ENCODE measurements at regions of chr5 and their contacts with region 1.

Region 1: DNA sequence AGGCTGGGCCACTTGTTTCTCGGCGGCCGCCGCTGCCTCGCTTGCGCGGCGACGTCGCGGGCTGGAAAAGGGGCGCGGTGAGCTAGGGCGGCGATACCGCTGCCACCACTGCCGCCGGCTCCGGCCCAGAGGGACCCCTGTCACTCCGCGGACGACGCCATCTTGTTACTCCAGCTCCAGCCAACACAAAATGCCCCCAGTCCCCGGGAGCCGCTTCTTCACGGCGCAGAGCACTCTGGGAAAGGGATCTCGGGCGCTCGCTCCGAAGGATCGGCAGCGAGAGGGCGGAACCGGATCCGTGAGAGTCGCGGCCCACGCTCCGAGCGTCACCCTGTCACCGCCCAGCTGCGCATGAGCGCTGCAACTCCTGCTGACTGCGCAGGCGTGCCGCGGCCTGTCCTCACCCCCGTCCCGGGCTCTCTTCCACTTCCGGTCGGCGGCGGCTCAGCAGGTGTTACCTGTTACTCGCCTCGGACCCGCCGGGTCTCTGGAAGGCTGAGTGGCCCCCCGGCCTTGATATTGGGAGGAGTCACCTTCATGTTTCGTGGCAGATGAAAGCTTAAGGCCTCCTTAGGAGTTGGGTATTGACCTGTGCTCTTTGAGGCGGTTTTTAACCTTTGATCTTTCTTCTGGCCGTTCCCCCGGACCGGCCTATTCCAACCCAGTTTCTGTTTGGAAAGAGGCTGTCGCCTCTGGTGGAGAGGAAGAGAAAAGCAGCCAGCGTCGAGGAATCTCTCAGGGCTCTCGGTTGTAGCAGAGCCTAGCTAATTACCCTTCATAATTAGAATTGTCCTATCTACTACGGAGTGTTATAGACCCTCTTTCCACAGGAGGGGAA is at the start of gene CSNK1A1:
- DNase-seq: peak; percentile 98 to 100 (median 99)
- ATAC-seq: peak; percentile 94 to 98 (median 98)
- H3K4me3 ChIP-seq: peak within 1 kb of the TSS; percentile 58 to 95 (median 90)
- H3K27ac ChIP-seq: peak within 1 kb of the TSS; percentile 93 to 100 (median 98)
- H3K4me1 ChIP-seq: peaks cover 4 to 44% (median 30%) of the 10 kb centered on the region in 12 donors
- H3K27me3 ChIP-seq: no peaks in the 10 kb centered on the region
- CTCF ChIP-seq: peak; percentile 65 to 91 (median 81)
- POLR2A ChIP-seq: peak; percentile 66 to 91
- total RNA-seq, gene CSNK1A1: 156 to 242 (median 210) TPM

Region 2: GRCh38 chr5:149434162-149435014 is 117.0 kb before region 1 on chr5:
- intact Hi-C with region 1: loop called in 1 of 10 experiments (anchors 5 kb)
- DNase-seq: peak in 3 of 5 donors; percentile 60 to 64 (median 62)
- ATAC-seq: peak; percentile 14 to 27 (median 22)
- H3K4me3 ChIP-seq: no peak overlapping the region
- H3K27ac ChIP-seq: peak overlapping the region in 10 of 12 donors; percentile 8 to 97 (median 44)
- H3K4me1 ChIP-seq: peaks cover 7 to 47% (median 23%) of the 10 kb centered on the region in 12 donors
- H3K27me3 ChIP-seq: no peaks in the 10 kb centered on the region
- CTCF ChIP-seq: peak; percentile 82 to 94 (median 88)
- POLR2A ChIP-seq: no peak

Region 3: GRCh38 chr5:149442563-149443182 is 108.7 kb before region 1 on chr5:
- intact Hi-C with region 1: loop called in 5 of 10 experiments (anchors 1 to 5 kb)
- DNase-seq: peak; percentile 81 to 90 (median 85)
- ATAC-seq: peak; percentile 79 to 90 (median 86)
- H3K4me3 ChIP-seq: no peak overlapping the region
- H3K27ac ChIP-seq: peak overlapping the region; percentile 70 to 96 (median 85)
- H3K4me1 ChIP-seq: peaks cover 0 to 42% (median 21%) of the 10 kb centered on the region in 12 donors
- H3K27me3 ChIP-seq: no peaks in the 10 kb centered on the region
- CTCF ChIP-seq: peak; percentile 90 to 96 (median 93)
- POLR2A ChIP-seq: no peak

Region 4: DNA sequence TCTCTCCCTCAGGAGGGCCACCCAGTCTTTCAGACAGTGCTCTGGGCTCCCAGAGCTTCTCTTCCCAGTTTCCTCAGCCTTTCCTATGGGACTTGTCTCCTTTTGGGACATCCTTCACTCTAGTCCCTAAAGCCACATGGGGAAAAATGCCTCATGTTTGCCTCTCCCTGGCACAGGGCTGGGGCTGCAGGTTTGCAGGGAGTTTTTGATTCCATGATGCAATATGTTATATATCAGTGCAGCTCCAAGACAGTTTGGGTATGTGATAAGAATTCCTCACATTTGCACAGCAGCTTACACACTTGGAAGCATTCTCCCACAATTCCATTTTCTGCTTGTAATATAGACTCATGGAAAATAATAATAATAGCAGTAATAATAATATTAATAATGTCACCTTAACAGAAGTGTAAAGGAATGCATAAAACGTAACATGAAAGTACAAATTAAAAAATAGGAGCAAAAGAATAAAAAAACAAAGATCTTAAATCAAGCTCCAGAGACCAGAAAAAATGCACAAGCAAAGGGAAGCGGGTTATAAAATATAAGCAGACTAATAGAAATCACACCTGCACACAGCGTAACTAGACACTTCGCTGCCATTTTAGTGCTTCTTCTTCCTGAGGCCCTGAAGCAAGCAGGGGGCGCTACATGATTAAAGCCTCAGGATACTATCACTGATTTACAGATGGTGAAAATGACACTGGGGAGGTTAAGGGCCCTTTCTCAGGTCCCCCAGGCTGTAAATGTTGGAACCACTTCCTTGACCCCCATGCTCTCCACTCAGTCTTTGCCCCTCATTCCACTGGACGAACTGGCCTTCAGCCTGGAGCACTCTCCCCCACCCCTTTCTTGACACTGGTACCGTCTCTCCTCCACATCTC is 102.3 kb before region 1 on chr5:
- intact Hi-C with region 1: loop called in 2 of 10 experiments (anchors 2 to 5 kb)
- DNase-seq: no peak
- ATAC-seq: no peak
- H3K4me3 ChIP-seq: no peak overlapping the region
- H3K27ac ChIP-seq: peak overlapping the region in 11 of 12 donors; percentile 79 to 94 (median 89)
- H3K4me1 ChIP-seq: peaks cover 15 to 92% (median 67%) of the 10 kb centered on the region in 12 donors
- H3K27me3 ChIP-seq: no peaks in the 10 kb centered on the region
- CTCF ChIP-seq: peak in 6 of 12 donors; percentile 16 to 39 (median 30)
- POLR2A ChIP-seq: no peak

Region 5: DNA sequence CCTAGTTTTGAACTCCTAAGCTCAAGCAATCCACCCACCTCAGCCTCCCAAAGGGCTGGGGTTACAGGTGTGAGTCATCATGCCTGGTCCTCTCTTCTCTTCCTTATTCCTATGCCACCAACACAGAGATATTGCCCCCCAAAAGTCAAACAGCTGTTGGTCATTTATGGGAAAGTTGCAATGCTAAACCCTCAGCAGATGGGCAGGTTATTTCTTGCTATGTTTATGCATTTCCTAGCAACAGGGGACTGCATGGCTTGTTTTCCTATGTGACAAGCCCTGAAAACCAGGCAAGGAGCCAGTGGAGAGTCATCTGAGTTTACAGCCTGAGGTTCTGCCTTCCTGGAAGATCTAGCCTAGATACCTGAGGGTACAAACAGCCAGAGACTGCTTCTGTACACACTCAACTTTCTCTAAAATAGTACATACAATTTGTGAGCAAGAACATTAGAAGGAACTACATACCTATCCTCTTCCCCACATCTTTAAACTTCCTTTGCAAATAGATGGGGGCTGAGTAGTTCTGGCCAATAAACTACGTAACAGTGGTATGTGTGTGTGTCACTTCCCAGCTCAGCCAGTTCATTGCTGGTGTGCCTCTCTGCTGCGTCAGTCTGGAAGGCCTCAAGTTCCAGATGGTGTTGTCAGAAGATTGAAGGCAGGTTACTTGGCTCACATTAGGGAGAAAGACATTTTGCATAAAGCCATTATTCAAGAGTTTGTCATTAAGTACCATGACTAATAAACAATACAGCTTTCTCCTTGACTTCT is 65.6 kb before region 1 on chr5:
- intact Hi-C with region 1: loop called in 3 of 10 experiments (anchors 5 to 10 kb)
- DNase-seq: peak in 4 of 5 donors; percentile 88 to 94 (median 90)
- ATAC-seq: peak; percentile 84 to 91 (median 88)
- H3K4me3 ChIP-seq: no peak overlapping the region
- H3K27ac ChIP-seq: peak overlapping the region; percentile 64 to 98 (median 88)
- H3K4me1 ChIP-seq: peaks cover 0 to 61% (median 42%) of the 10 kb centered on the region in 12 donors
- H3K27me3 ChIP-seq: no peaks in the 10 kb centered on the region
- CTCF ChIP-seq: no peak
- POLR2A ChIP-seq: no peak

Region 6: DNA sequence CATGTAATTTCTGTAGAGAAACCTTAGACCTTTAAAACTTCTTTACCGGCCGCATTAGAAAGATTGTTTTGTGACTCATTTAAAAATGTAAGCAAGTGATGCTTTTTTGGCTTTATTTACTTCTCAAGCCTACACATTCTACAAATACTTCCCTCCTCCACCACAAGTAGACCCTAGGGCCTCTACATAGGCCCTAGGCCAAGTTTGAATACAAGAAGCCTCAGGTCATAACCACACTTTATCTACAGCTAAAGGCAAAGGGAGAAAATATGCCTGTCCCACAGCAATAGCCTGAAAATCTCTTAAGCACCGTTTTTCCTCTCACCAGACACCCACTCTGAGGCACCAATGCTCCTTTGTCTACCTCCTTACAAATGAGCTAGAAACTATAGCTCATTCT is 54.1 kb before region 1 on chr5:
- intact Hi-C with region 1: loop called in 3 of 10 experiments (anchors 5 to 10 kb)
- DNase-seq: no peak
- ATAC-seq: peak in 3 of 4 donors; percentile 29 to 58 (median 52)
- H3K4me3 ChIP-seq: no peak overlapping the region
- H3K27ac ChIP-seq: peak overlapping the region in 10 of 12 donors; percentile 8 to 70 (median 49)
- H3K4me1 ChIP-seq: peaks cover 0 to 27% (median 11%) of the 10 kb centered on the region in 12 donors
- H3K27me3 ChIP-seq: no peaks in the 10 kb centered on the region
- CTCF ChIP-seq: no peak
- POLR2A ChIP-seq: no peak

Region 7: GRCh38 chr5:149517461-149518122 is 33.8 kb before region 1 on chr5:
- intact Hi-C with region 1: loop called in 2 of 10 experiments (anchors 5 kb)
- DNase-seq: no peak
- ATAC-seq: peak; percentile 38 to 72 (median 56)
- H3K4me3 ChIP-seq: no peak overlapping the region
- H3K27ac ChIP-seq: peak overlapping the region in 7 of 12 donors; percentile 7 to 46 (median 27)
- H3K4me1 ChIP-seq: peaks cover 8 to 99% (median 85%) of the 10 kb centered on the region in 12 donors
- H3K27me3 ChIP-seq: no peaks in the 10 kb centered on the region
- CTCF ChIP-seq: peak in 2 of 12 donors; percentile 30
- POLR2A ChIP-seq: no peak

Region 8: DNA sequence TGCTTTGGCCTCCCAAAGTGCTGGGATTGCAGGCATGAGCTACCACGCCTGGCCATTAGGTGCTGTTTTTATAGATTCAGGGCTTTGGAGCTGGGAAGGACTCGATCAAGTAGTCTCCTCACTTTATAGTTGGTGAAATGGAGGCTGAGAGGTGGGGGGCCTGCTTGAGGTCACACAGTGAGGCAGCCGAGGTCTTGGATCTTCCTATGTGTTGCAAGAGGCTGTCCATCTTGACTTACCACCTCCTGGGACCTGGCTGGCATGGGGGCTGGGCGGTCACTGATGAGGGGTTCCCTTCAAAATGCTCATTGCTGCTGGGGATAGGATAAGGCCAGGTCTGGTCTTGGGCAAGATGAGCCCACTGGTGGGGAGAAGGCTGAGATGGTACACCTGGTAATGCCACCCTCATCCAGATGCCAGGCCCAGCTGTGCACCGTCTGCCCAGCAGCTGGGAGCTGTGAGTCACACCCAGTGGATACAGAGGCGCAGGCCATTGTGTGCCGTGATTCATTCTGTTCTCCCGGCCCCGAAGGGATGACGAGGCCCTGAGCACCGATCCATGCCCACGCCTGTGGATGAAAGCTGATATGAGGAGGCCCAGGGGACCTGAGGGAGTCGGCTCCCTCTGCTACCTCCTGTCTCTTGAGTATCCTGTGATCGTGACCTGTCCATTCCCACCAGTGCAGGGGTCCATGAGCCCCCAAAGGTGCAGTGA is 946.0 kb after region 1 on chr5:
- intact Hi-C with region 1: no loop called
- DNase-seq: peak in 3 of 5 donors; percentile 51 to 89 (median 73)
- ATAC-seq: peak; percentile 12 to 88 (median 76)
- H3K4me3 ChIP-seq: no peak overlapping the region
- H3K27ac ChIP-seq: peak overlapping the region; percentile 63 to 88 (median 82)
- H3K4me1 ChIP-seq: peaks cover 21 to 80% (median 71%) of the 10 kb centered on the region in 12 donors
- H3K27me3 ChIP-seq: no peaks in the 10 kb centered on the region
- CTCF ChIP-seq: peak in 1 of 12 donors; percentile 7
- POLR2A ChIP-seq: no peak

Measured in heart left ventricle (tissue), 16 donors.